K562 (cell line): ENCODE measurements at regions of chr1 and their contacts with region 1.

Region 1: GRCh38 chr1:220733090-220733601 is 15.0 kb upstream of the MTARC2 start:
- DNase-seq: peak; percentile 80 to 82 (median 82)
- ATAC-seq: peak; percentile 99
- H3K4me3 ChIP-seq: no peak overlapping the region
- H3K27ac ChIP-seq: no peak overlapping the region
- H3K4me1 ChIP-seq: no peaks in the 10 kb centered on the region
- H3K27me3 ChIP-seq: peaks cover 3 to 4% of the 10 kb centered on the region in 2 experiments; a peak in 1 of 5 replicates
- CTCF ChIP-seq: peak; percentile 82 to 84 (median 84)
- EP300 ChIP-seq: no peak
- POLR2A ChIP-seq: no peak
- RAD21 ChIP-seq: peak; percentile 70 to 78

Region 2: GRCh38 chr1:220281159-220281574 is 452.0 kb before region 1 on chr1:
- CTCF ChIA-PET with region 1: no interaction called
- POLR2A ChIA-PET with region 1: interaction called, 4 read pairs
- in situ Hi-C with region 1: no loop called
- intact Hi-C with region 1: loop called (anchors 2 kb)
- DNase-seq: peak in 2 of 4 experiments; percentile 36 to 47
- ATAC-seq: peak; percentile 78
- H3K4me3 ChIP-seq: no peak overlapping the region
- H3K27ac ChIP-seq: no peak overlapping the region
- H3K4me1 ChIP-seq: no peaks in the 10 kb centered on the region
- H3K27me3 ChIP-seq: peaks cover 8 to 17% of the 10 kb centered on the region in 2 experiments; a peak in 4 of 5 replicates
- CTCF ChIP-seq: peak; percentile 52 to 73 (median 57); a peak in 5 of 6 replicates
- EP300 ChIP-seq: no peak; the same call in 1 of the 2 replicates
- POLR2A ChIP-seq: no peak
- RAD21 ChIP-seq: peak; percentile 69 to 89

Region 3: DNA sequence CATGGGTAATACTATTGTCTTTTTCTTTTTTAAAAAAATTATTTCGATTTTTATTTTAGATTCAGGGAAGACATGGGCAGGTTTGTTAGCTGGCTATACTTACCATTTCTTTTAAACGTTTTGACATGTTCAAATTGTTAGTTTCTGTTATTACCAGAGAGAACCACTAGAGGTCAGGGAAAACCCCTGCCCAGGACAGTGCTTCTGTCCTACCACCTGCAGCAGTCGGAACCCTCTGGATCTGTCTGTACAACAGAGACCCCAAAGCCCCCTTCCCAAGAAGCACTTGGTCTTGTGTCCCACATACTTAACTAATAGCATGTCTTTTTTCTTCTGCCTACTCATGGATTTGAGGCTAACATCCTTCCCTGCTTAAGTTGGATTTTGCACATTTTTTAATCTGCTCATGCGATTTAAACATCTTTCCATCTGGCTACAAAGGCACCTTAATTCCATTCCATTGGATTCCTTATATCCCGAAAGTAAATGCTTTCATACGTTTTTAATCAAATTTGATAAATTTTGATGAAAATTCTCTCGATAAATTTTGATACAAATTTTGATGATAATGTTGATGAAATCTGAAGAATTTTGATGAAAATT is 53.0 kb before region 1 on chr1:
- CTCF ChIA-PET with region 1: interaction called, 3 read pairs
- POLR2A ChIA-PET with region 1: no interaction called
- in situ Hi-C with region 1: no loop called
- intact Hi-C with region 1: loop called (anchors 1 kb)
- DNase-seq: peak; percentile 46 to 62 (median 51)
- ATAC-seq: peak; percentile 97
- H3K4me3 ChIP-seq: no peak overlapping the region
- H3K27ac ChIP-seq: no peak overlapping the region
- H3K4me1 ChIP-seq: no peaks in the 10 kb centered on the region
- H3K27me3 ChIP-seq: peaks cover 2 to 14% of the 10 kb centered on the region in 2 experiments; a peak in 2 of 5 replicates
- CTCF ChIP-seq: peak; percentile 71 to 78 (median 73)
- EP300 ChIP-seq: no peak
- POLR2A ChIP-seq: no peak
- RAD21 ChIP-seq: peak; percentile 61 to 69

Region 4: GRCh38 chr1:220690140-220691025 is 42.8 kb before region 1 on chr1 and contains the start of gene C1orf115:
- CTCF ChIA-PET with region 1: no interaction called
- POLR2A ChIA-PET with region 1: no interaction called
- in situ Hi-C with region 1: no loop called
- intact Hi-C with region 1: no loop called
- DNase-seq: peak; percentile 5 to 63 (median 53)
- ATAC-seq: peak; percentile 83
- H3K4me3 ChIP-seq: no peak within 1 kb of the TSS
- H3K27ac ChIP-seq: no peak within 1 kb of the TSS
- H3K4me1 ChIP-seq: peaks cover 0 to 7% of the 10 kb centered on the region in 2 experiments; a peak in 1 of 5 replicates
- H3K27me3 ChIP-seq: peaks cover 6 to 15% of the 10 kb centered on the region in 2 experiments; a peak in 2 of 5 replicates
- CTCF ChIP-seq: peak; percentile 26 to 58 (median 44); a peak in 5 of 6 replicates
- EP300 ChIP-seq: no peak
- POLR2A ChIP-seq: no peak
- RAD21 ChIP-seq: no peak
- polyA plus RNA-seq, gene C1orf115: not detected